ENCODE measurements at regions of chr15 and their contacts with region 1.

Region 1: GRCh38 chr15:42137431-42138261 is 18.8 kb downstream of the PLA2G4F start:
- DNase-seq: no peak
- ATAC-seq: peak; percentile 69
- H3K4me3 Mint-ChIP-seq: no peak overlapping the region
- H3K27ac Mint-ChIP-seq: no peak overlapping the region
- H3K4me1 Mint-ChIP-seq: no peaks in the 10 kb centered on the region
- H3K27me3 Mint-ChIP-seq: no peaks in the 10 kb centered on the region
- CTCF ChIP-seq: 0 out of 2 replicates have a peak, but pooled peaks have one; percentile 13

Region 2: GRCh38 chr15:41989259-41989933 is 148.2 kb before region 1 on chr15:
- CTCF ChIA-PET with region 1: interaction called, 47 read pairs
- POLR2A ChIA-PET with region 1: no interaction called
- DNase-seq: peak; percentile 98
- ATAC-seq: peak; percentile 95
- H3K4me3 Mint-ChIP-seq: no peak overlapping the region
- H3K27ac Mint-ChIP-seq: no peak overlapping the region
- H3K4me1 Mint-ChIP-seq: peaks cover 6% of the 10 kb centered on the region
- H3K27me3 Mint-ChIP-seq: no peaks in the 10 kb centered on the region
- CTCF ChIP-seq: peak; percentile 97

Region 3: GRCh38 chr15:42056934-42057779 is 80.5 kb before region 1 on chr15:
- CTCF ChIA-PET with region 1: interaction called, 97 read pairs
- POLR2A ChIA-PET with region 1: no interaction called
- DNase-seq: peak; percentile 89
- ATAC-seq: peak; percentile 96
- H3K4me3 Mint-ChIP-seq: peak overlapping the region; percentile 48
- H3K27ac Mint-ChIP-seq: peak overlapping the region; percentile 57; the same call in 1 of the 2 replicates
- H3K4me1 Mint-ChIP-seq: peaks cover 12% of the 10 kb centered on the region
- H3K27me3 Mint-ChIP-seq: no peaks in the 10 kb centered on the region
- CTCF ChIP-seq: 0 out of 2 replicates have a peak, but pooled peaks have one; percentile 30

Region 4: DNA sequence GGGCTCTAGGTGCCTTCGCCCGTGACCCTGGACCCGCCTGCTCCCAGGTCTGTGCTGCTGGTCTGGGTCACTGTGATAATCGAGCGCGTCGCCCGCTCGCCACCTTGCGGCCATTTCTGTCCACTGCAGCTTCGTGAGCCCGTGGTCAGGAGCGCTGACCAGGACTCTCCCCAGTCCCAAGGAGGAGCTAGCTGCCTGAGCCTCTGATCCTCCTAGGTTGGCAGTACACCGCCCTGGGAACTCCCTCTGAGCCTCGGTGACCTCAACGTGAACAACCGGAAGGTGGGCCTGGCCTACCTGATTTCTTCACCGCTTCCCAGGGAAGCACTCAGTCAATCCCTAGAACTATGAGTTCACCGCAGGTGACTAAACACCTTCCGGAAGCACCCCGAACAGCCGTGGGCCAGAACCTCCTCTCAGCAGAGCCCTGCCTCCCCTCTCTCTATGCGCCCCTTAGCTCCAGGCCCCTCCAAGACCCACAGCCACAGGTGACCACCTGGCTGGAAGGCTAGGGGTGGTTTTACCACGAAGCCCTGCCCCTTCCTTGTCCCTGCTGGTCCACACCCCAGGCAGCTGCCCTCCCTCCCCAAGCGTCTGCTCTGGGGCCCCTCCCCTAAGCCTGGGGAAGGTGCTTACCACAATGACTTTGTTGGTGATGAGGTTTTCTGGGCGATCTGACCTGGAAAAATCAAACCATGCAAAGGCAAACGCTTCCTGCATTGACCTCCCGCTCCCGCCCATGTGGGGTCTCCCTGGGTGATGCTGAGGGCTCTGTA is 53.0 kb before region 1 on chr15:
- CTCF ChIA-PET with region 1: interaction called, 142 read pairs
- POLR2A ChIA-PET with region 1: no interaction called
- DNase-seq: peak; percentile 85
- ATAC-seq: peak; percentile 85
- H3K4me3 Mint-ChIP-seq: no peak overlapping the region
- H3K27ac Mint-ChIP-seq: no peak overlapping the region
- H3K4me1 Mint-ChIP-seq: peaks cover 26% of the 10 kb centered on the region
- H3K27me3 Mint-ChIP-seq: no peaks in the 10 kb centered on the region; the same call in 1 of the 2 replicates
- CTCF ChIP-seq: peak; percentile 94

Region 5: GRCh38 chr15:42107473-42107872 is 30.2 kb before region 1 on chr15:
- CTCF ChIA-PET with region 1: interaction called, 12 read pairs
- POLR2A ChIA-PET with region 1: no interaction called
- DNase-seq: no peak
- ATAC-seq: no peak
- H3K4me3 Mint-ChIP-seq: no peak overlapping the region
- H3K27ac Mint-ChIP-seq: no peak overlapping the region
- H3K4me1 Mint-ChIP-seq: 0 out of 2 replicates have a peak, but pooled peaks cover 3% of the 10 kb centered on the region
- H3K27me3 Mint-ChIP-seq: no peaks in the 10 kb centered on the region
- CTCF ChIP-seq: no peak

Region 6: GRCh38 chr15:42156243-42156922 is 18.7 kb after region 1 on chr15 and contains the start of gene PLA2G4F:
- CTCF ChIA-PET with region 1: interaction called, 14 read pairs
- POLR2A ChIA-PET with region 1: no interaction called
- DNase-seq: no peak
- ATAC-seq: peak; percentile 58
- H3K4me3 Mint-ChIP-seq: no peak within 1 kb of the TSS
- H3K27ac Mint-ChIP-seq: peak within 1 kb of the TSS; percentile 46; the same call in 1 of the 2 replicates
- H3K4me1 Mint-ChIP-seq: peaks cover 7% of the 10 kb centered on the region
- H3K27me3 Mint-ChIP-seq: no peaks in the 10 kb centered on the region
- CTCF ChIP-seq: no peak
- total RNA-seq, gene PLA2G4F: 0.11 to 0.18 TPM (median 0.16 TPM) in 3 replicates

Region 7: DNA sequence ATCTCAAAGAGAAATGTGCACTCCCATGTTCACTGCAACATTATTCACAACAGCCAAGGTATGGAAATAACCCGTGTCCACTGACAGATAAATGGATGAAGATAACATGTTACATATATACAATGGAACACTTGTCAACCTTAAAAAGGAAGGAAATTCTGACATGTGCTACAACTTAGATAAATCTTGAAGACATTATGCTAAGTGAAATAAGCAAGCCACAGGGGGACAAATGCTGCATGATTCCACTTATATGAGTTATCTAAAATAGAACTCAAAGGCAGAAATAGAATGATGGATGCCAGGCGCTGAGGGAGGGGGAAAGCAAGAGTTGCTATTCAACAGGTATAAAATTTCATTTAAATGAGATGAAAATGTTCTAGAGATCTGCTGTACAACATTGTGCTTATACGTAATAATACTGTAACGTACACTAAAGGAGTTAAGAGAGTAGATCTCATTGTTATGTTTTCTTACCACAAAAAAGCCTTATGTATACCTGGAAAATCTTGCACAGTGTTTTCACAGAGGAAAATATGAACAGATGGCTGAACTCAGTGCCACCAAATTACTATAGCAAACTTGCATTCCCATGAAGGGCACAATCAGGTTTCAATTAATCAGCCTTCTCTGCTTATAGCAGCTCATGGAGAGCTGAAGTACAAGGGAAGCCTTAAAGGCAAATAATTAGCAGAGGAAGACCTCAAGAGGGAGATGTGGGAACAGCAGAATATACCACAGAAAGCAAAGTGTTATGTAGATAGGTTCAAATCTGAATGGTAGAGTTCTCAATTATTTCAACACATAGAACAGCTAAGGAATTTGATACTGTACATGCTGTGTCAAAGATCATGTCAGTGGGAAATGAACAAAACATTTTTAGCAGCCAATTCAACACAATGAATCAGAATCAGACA is 78.5 kb after region 1 on chr15:
- CTCF ChIA-PET with region 1: no interaction called
- POLR2A ChIA-PET with region 1: no interaction called
- DNase-seq: no peak
- ATAC-seq: no peak
- H3K4me3 Mint-ChIP-seq: no peak overlapping the region
- H3K27ac Mint-ChIP-seq: no peak overlapping the region
- H3K4me1 Mint-ChIP-seq: no peaks in the 10 kb centered on the region
- H3K27me3 Mint-ChIP-seq: no peaks in the 10 kb centered on the region
- CTCF ChIP-seq: no peak

Measured in WTC11 (cell line).